Activated B cell treated with CpG ODN at 0.5 μM for 24 hours (primary cell): ENCODE measurements at regions of chr11 and their contacts with region 1.

Region 1: GRCh38 chr11:117946842-117947526 is 17.8 kb upstream of the TMPRSS13 start:
- DNase-seq: peak; percentile 79
- ATAC-seq: peak; percentile 34
- H3K4me3 Mint-ChIP-seq: no peak overlapping the region
- H3K27ac Mint-ChIP-seq: peak overlapping the region; percentile 62
- H3K4me1 Mint-ChIP-seq: peaks cover 60% of the 10 kb centered on the region
- H3K27me3 Mint-ChIP-seq: peaks cover 2% of the 10 kb centered on the region
- CTCF ChIP-seq: peak; percentile 86

Region 2: DNA sequence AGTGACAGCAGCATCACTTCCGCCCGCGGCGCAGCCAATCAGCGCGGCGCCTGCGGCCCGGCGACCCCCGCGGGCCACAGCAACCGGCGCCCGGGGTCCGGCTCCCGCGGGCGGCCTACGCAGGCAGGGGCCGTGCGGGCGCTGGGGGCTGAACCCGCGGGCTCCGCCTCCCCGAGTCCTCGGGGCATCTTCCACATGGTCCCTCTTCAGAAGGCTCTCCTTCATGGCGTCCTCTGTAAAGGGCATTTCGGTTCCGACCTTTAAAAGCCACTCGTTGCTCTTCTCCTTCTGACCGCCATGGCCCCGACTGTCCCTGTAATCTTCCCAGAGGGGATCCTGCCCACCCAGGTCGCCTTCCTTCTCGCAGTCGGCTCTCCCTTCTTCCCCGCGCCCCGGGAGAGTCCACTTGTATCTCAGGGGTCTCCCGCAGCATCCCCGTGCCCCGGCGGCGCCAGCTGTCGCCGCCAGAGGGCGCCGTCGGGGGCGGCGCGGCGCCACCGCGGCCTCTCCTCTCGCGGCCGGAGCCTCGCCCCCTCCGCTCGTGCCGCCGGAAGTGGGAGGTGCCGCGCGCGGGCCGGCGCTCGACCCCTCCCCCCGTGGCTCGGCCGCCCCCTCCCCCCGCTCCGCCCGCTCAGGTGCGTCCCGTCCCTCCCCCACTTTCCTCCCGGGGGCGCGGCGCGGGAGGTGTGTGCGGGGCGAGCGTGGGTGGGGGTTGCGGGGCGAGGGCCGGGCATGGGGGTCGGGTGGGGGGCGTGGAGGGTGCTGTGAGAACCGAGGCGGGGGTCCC is 714.7 kb before region 1 on chr11 and contains the start of gene RNF214:
- CTCF ChIA-PET with region 1: interaction called, 4 read pairs
- POLR2A ChIA-PET with region 1: no interaction called
- intact Hi-C with region 1: loop called (anchors 5 kb)
- DNase-seq: peak; percentile 82
- ATAC-seq: peak; percentile 74
- H3K4me3 Mint-ChIP-seq: peak within 1 kb of the TSS; percentile 100
- H3K27ac Mint-ChIP-seq: peak within 1 kb of the TSS; percentile 100
- H3K4me1 Mint-ChIP-seq: peaks cover 43% of the 10 kb centered on the region
- H3K27me3 Mint-ChIP-seq: no peaks in the 10 kb centered on the region
- CTCF ChIP-seq: peak; percentile 69
- total RNA-seq, gene RNF214: 18.7 and 22.3 TPM in 2 replicates

Region 3: GRCh38 chr11:117828611-117829368 is 118.2 kb before region 1 on chr11:
- CTCF ChIA-PET with region 1: interaction called, 110 read pairs
- POLR2A ChIA-PET with region 1: interaction called, 17 read pairs
- intact Hi-C with region 1: loop called (anchors 1 kb)
- DNase-seq: peak; percentile 79
- ATAC-seq: peak; percentile 89
- H3K4me3 Mint-ChIP-seq: peak overlapping the region; percentile 44
- H3K27ac Mint-ChIP-seq: peak overlapping the region; percentile 80
- H3K4me1 Mint-ChIP-seq: peaks cover 51% of the 10 kb centered on the region
- H3K27me3 Mint-ChIP-seq: peaks cover 23% of the 10 kb centered on the region
- CTCF ChIP-seq: no peak

Region 4: GRCh38 chr11:117919781-117920221 is 27.2 kb before region 1 on chr11:
- CTCF ChIA-PET with region 1: interaction called, 10 read pairs
- POLR2A ChIA-PET with region 1: interaction called, 4 read pairs
- intact Hi-C with region 1: loop called (anchors 2 kb)
- DNase-seq: no peak
- ATAC-seq: peak; percentile 86
- H3K4me3 Mint-ChIP-seq: peak overlapping the region; percentile 24
- H3K27ac Mint-ChIP-seq: peak overlapping the region; percentile 84
- H3K4me1 Mint-ChIP-seq: peaks cover 16% of the 10 kb centered on the region
- H3K27me3 Mint-ChIP-seq: no peaks in the 10 kb centered on the region
- CTCF ChIP-seq: no peak

Region 5: GRCh38 chr11:117985953-117986887 is 39.2 kb after region 1 on chr11 and contains the start of gene IL10RA:
- CTCF ChIA-PET with region 1: interaction called, 47 read pairs
- POLR2A ChIA-PET with region 1: interaction called, 930 read pairs
- intact Hi-C with region 1: loop called (anchors 1 kb)
- DNase-seq: peak; percentile 93
- ATAC-seq: peak; percentile 89
- H3K4me3 Mint-ChIP-seq: peak within 1 kb of the TSS; percentile 90
- H3K27ac Mint-ChIP-seq: peak within 1 kb of the TSS; percentile 96
- H3K4me1 Mint-ChIP-seq: peaks cover 89% of the 10 kb centered on the region
- H3K27me3 Mint-ChIP-seq: no peaks in the 10 kb centered on the region
- CTCF ChIP-seq: no peak
- total RNA-seq, gene IL10RA: 303 and 350 TPM in 2 replicates

Region 6: DNA sequence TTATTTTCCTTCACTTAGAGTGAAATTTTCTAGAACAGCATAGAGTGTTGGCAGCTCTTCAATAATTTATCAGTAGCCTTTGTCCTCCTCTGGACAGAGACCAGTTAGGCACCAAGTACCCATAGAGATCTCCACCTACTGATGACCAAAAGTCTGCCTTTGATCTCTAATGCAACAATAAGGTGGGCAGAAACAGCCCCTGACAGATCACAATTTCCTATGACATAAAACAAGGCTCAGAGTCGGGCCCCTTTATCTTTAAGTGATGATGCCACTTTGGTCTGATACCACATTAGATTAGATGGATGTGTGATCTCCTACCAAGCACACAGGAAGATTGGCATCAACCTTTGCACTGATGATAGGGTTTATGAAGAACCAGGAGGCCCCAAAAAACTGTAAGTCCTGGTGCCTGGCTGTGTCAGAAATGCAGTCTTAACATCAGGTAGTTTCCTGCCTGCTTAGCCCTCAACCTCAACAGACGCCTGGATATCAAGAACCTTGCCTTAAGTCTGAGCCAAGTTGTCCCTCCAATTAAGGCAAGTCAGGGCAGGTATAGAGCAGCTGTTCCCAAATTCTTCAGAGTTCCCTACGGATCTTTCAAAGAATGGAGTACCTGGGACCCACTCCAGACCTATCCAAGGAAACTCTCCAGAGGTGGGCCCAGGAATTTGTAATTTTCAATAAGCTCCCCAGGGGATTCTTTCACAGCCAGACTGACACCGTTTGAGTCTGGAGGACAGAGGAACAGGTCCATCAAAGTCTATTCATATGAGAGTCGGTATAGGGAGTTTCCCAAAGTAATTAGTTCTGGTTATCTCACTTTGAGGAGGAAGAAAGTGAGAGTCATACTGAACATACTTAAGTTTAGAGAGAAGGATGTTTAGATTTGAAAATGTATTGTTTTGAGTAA is 99.3 kb after region 1 on chr11:
- CTCF ChIA-PET with region 1: interaction called, 294 read pairs
- POLR2A ChIA-PET with region 1: interaction called, 84 read pairs
- intact Hi-C with region 1: no loop called
- DNase-seq: no peak
- ATAC-seq: peak; percentile 53
- H3K4me3 Mint-ChIP-seq: no peak overlapping the region
- H3K27ac Mint-ChIP-seq: peak overlapping the region; percentile 56
- H3K4me1 Mint-ChIP-seq: peaks cover 40% of the 10 kb centered on the region
- H3K27me3 Mint-ChIP-seq: no peaks in the 10 kb centered on the region
- CTCF ChIP-seq: no peak